ENCODE measurements at regions of chr19 and their contacts with region 1.

Region 1: GRCh38 chr19:57954996-57955395 is 7.5 kb upstream of the ZNF256 start:
- DNase-seq: no peak
- ATAC-seq: no peak
- H3K4me3 ChIP-seq: no peak overlapping the region
- H3K27ac ChIP-seq: no peak overlapping the region
- H3K4me1 ChIP-seq: no peaks in the 10 kb centered on the region
- H3K27me3 ChIP-seq: no peaks in the 10 kb centered on the region

Region 2: GRCh38 chr19:57992841-57993240 is 37.8 kb after region 1 on chr19:
- intact Hi-C with region 1: loop called in 1 of 4 experiments (anchors 5 kb)
- DNase-seq: no peak
- ATAC-seq: no peak
- H3K4me3 ChIP-seq: no peak overlapping the region
- H3K27ac ChIP-seq: no peak overlapping the region
- H3K4me1 ChIP-seq: no peaks in the 10 kb centered on the region
- H3K27me3 ChIP-seq: no peaks in the 10 kb centered on the region